Sciatic nerve (tissue), 2 donors: ENCODE measurements at regions of chr5 and their contacts with region 1.

Region 1: GRCh38 chr5:72366324-72366976 is 46.3 kb downstream of the PTCD2 start:
- DNase-seq: peak; percentile 80
- ATAC-seq: peak; percentile 88

Region 2: GRCh38 chr5:72510610-72511181 is 144.2 kb after region 1 on chr5:
- intact Hi-C with region 1: loop called (anchors 10 kb)
- DNase-seq: peak; percentile 62
- ATAC-seq: peak; percentile 60